ENCODE measurements at regions of chr11 and their contacts with region 1.

Region 1: GRCh38 chr11:65888163-65888814 is at the start of gene FIBP:
- DNase-seq: peak; percentile 96 to 98 (median 97)
- H3K4me3 ChIP-seq: peak within 1 kb of the TSS; percentile 55 to 97 (median 88)
- H3K27ac ChIP-seq: peak within 1 kb of the TSS; percentile 40 to 87
- H3K4me1 ChIP-seq: peaks cover 8 to 66% (median 60%) of the 10 kb centered on the region in 4 experiments
- H3K27me3 ChIP-seq: no peaks in the 10 kb centered on the region

Region 2: GRCh38 chr11:65711785-65712632 is 176.3 kb before region 1 on chr11 and contains the start of gene KAT5:
- CTCF ChIA-PET with region 1: interaction called, 18 read pairs
- POLR2A ChIA-PET with region 1: interaction called, 3 read pairs
- DNase-seq: peak; percentile 98 to 99 (median 99)
- H3K4me3 ChIP-seq: peak within 1 kb of the TSS; percentile 46 to 88 (median 76)
- H3K27ac ChIP-seq: peak within 1 kb of the TSS; percentile 98 to 99
- H3K4me1 ChIP-seq: peaks cover 2 to 22% (median 13%) of the 10 kb centered on the region in 4 experiments
- H3K27me3 ChIP-seq: no peaks in the 10 kb centered on the region

Region 3: GRCh38 chr11:65791691-65792213 is 96.5 kb before region 1 on chr11:
- CTCF ChIA-PET with region 1: no interaction called
- POLR2A ChIA-PET with region 1: no interaction called
- DNase-seq: peak; percentile 63 to 93 (median 91)
- H3K4me3 ChIP-seq: peak overlapping the region in 1 of 7 experiments; percentile 7
- H3K27ac ChIP-seq: no peak overlapping the region
- H3K4me1 ChIP-seq: peaks cover 0 to 37% (median 32%) of the 10 kb centered on the region in 4 experiments
- H3K27me3 ChIP-seq: peaks cover 0 to 30% (median 15%) of the 10 kb centered on the region in 5 experiments

Region 4: GRCh38 chr11:65817835-65818742 is 70.2 kb before region 1 on chr11:
- CTCF ChIA-PET with region 1: interaction called, 17 read pairs
- POLR2A ChIA-PET with region 1: no interaction called
- DNase-seq: peak; percentile 87 to 93 (median 92)
- H3K4me3 ChIP-seq: peak overlapping the region; percentile 50 to 89 (median 75)
- H3K27ac ChIP-seq: peak overlapping the region in 1 of 2 experiments; percentile 62
- H3K4me1 ChIP-seq: peaks cover 3 to 17% (median 15%) of the 10 kb centered on the region in 4 experiments
- H3K27me3 ChIP-seq: no peaks in the 10 kb centered on the region

Region 5: DNA sequence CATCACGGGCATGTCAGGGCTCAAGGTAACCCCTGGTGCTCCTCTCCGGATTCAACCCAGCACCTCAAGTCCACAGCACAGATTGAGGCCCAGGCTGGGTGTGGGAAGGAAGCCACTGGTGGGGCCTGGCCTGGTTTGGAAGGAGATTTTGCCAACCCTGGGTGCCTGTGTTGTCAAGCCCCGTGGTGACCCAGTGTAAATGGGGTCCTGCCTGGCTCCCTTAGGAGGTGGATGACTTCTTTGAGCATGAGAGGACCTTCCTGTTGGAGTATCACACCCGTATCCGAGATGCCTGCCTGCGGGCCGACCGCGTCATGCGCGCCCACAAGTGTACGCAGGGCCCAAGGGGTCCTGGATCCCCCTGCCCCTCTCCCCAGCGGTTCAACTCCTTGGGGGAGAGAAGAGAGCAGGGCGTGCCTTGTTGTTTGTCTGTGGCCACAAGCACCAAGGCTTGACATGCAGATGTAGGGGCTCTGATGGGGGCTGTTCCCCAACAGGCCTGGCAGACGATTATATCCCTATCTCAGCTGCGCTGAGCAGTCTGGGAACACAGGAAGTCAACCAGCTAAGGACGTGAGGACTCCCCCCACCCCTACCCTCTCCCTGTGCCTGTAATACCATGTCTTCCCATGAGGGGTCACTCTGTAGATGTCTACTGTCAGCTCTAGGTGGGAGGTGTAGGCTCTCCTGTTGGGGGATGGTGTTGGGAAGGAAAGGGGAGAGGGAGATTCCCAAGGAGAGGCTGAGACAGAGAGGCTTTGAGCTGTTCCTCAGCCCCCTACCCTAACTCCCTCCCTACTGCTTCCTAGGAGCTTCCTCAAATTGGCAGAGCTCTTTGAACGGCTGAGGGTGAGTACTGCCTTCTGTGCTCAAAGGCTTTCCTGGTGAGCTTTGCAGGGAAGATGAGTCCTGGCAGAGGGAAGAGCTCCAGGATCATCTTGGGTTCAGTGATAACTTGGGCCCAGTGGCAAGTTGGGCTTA is 37.2 kb before region 1 on chr11:
- CTCF ChIA-PET with region 1: interaction called, 124 read pairs
- POLR2A ChIA-PET with region 1: no interaction called
- DNase-seq: peak in 1 of 3 donors; percentile 34
- H3K4me3 ChIP-seq: no peak overlapping the region
- H3K27ac ChIP-seq: no peak overlapping the region
- H3K4me1 ChIP-seq: peaks cover 0 to 9% (median 8%) of the 10 kb centered on the region in 4 experiments
- H3K27me3 ChIP-seq: no peaks in the 10 kb centered on the region

Region 6: GRCh38 chr11:65873318-65874156 is 14.8 kb before region 1 on chr11:
- CTCF ChIA-PET with region 1: interaction called, 168 read pairs
- POLR2A ChIA-PET with region 1: interaction called, 4 read pairs
- DNase-seq: peak; percentile 84 to 89 (median 89)
- H3K4me3 ChIP-seq: peak overlapping the region; percentile 10 to 82 (median 65)
- H3K27ac ChIP-seq: peak overlapping the region in 1 of 2 experiments; percentile 43
- H3K4me1 ChIP-seq: peaks cover 0 to 53% (median 40%) of the 10 kb centered on the region in 4 experiments
- H3K27me3 ChIP-seq: no peaks in the 10 kb centered on the region

Region 7: GRCh38 chr11:65919146-65920033 is 31.1 kb after region 1 on chr11 and contains the start of gene DRAP1:
- CTCF ChIA-PET with region 1: interaction called, 11 read pairs
- POLR2A ChIA-PET with region 1: interaction called, 8 read pairs
- DNase-seq: peak; percentile 98 to 100 (median 99)
- H3K4me3 ChIP-seq: peak within 1 kb of the TSS; percentile 71 to 99 (median 97)
- H3K27ac ChIP-seq: peak within 1 kb of the TSS; percentile 85 to 95
- H3K4me1 ChIP-seq: peaks cover 0 to 62% (median 48%) of the 10 kb centered on the region in 4 experiments
- H3K27me3 ChIP-seq: no peaks in the 10 kb centered on the region

Region 8: DNA sequence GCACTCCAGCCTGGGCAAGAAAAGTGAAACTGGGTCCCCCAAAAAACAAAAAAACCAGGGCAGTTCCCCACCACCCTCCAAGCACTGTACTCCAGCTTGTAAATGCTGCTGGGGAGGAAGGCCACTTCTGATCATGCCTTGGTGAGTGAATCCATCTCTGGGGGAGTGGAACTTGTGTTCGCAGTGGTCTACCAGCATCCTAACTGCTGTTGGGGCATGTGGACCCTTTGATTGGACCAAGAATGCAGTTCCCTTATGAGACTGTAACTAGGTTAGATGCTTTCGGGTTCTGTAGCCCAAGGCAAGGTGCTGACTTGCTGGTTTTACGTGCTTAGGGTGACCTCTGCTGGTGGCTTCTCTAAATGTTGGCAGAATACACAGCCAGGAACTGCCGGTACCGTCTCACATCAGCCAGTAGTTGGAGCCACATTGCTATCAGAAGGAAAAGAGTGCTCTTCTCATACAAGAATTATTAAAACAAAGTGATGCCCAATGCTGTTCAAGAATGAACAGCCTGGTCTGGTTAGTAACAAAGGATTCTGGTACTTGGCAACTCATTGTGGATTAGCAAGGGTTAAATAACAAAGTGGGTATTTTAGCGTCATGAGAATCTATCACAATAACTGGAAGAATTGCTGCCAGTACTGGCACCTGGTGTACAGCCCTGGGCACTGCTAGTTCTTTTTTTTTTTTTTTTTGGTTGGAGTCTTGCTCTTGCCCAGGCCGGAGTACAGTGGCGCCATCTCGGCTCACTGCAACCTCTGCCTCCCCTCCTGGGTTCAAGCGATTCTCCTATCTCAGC is 100.7 kb after region 1 on chr11:
- CTCF ChIA-PET with region 1: interaction called, 86 read pairs
- POLR2A ChIA-PET with region 1: interaction called, 5 read pairs
- DNase-seq: peak; percentile 97 to 99 (median 98)
- H3K4me3 ChIP-seq: peak overlapping the region in 1 of 7 experiments; percentile 23
- H3K27ac ChIP-seq: no peak overlapping the region
- H3K4me1 ChIP-seq: peaks cover 0 to 2% (median 0%) of the 10 kb centered on the region in 4 experiments
- H3K27me3 ChIP-seq: no peaks in the 10 kb centered on the region

Region 9: GRCh38 chr11:66112601-66113098 is 224.4 kb after region 1 on chr11:
- CTCF ChIA-PET with region 1: no interaction called
- POLR2A ChIA-PET with region 1: no interaction called
- DNase-seq: no peak
- H3K4me3 ChIP-seq: no peak overlapping the region
- H3K27ac ChIP-seq: peak overlapping the region in 1 of 2 experiments; percentile 1
- H3K4me1 ChIP-seq: peaks cover 39 to 51% (median 39%) of the 10 kb centered on the region in 4 experiments
- H3K27me3 ChIP-seq: no peaks in the 10 kb centered on the region

Region 10: GRCh38 chr11:66159324-66159984 is 271.2 kb after region 1 on chr11:
- CTCF ChIA-PET with region 1: no interaction called
- POLR2A ChIA-PET with region 1: no interaction called
- DNase-seq: no peak
- H3K4me3 ChIP-seq: no peak overlapping the region
- H3K27ac ChIP-seq: no peak overlapping the region
- H3K4me1 ChIP-seq: peaks cover 0 to 15% (median 9%) of the 10 kb centered on the region in 4 experiments
- H3K27me3 ChIP-seq: no peaks in the 10 kb centered on the region